Activated T-helper 1 cell treated with anti-CD3 and anti-CD28 coated beads, Interleukin-12 subunit alpha, Interleukin-12 subunit beta, Interleukin-2, Interleukin-4 antibody, amounts not matched to agents 30 ng/mL and 10 ng/mL and 1 ng/mL, durations not matched to agents 14 hours and 24 hours and 36 hours (primary cell): ENCODE measurements at regions of chr6 and their contacts with region 1.

Region 1: GRCh38 chr6:109690737-109691621 is at the starts of genes AK9 and FIG4:
- DNase-seq: peak; percentile 85
- H3K4me3 Mint-ChIP-seq: peak within 1 kb of the TSS; percentile 87
- H3K27ac Mint-ChIP-seq: peak within 1 kb of the TSS; percentile 84
- H3K4me1 Mint-ChIP-seq: peaks cover 47% of the 10 kb centered on the region
- H3K27me3 Mint-ChIP-seq: peaks cover 13% of the 10 kb centered on the region
- total RNA-seq, gene AK9: 2.8 and 3.8 TPM in 2 replicates
- total RNA-seq, gene FIG4: 7.5 and 8.1 TPM in 2 replicates

Region 2: DNA sequence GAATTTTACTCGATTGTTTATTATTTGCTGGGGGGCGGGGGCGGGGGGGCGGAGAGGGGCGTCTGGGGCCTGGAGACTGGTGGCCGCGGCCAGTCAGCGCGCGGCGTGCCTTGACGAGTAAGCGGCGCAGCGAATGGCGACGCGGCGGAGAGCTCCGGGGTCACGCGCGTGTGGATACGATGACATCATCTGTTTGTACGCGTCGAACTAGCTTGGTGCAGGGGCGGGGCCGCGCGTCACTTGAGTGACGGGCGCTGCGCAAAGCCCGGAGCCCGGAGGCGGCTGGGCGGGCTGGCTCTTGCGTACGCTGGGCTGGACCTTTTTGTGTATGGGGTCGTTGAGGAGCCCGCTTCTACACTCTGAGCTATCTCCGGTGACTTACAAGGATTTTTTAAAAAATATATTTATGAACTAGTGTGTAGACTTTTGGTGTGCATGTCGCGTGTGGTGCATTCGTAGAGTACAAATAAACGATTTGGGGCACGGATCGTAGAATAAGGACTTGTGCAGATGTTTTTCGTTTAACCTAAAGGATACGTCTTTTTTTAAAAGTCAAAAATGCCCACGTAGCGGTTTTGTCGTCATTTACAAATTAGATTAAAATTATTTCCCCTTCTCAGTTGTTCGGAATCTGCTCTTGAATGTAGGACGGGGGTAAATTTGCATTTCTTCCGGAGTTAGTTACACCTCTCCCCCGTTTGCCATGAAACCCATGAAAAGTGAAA is 1132.4 kb before region 1 on chr6:
- intact Hi-C with region 1: loop called (anchors 5 kb)
- DNase-seq: peak; percentile 95
- H3K4me3 Mint-ChIP-seq: peak overlapping the region; percentile 88
- H3K27ac Mint-ChIP-seq: peak overlapping the region; percentile 91
- H3K4me1 Mint-ChIP-seq: peaks cover 32% of the 10 kb centered on the region
- H3K27me3 Mint-ChIP-seq: peaks cover 47% of the 10 kb centered on the region

Region 3: GRCh38 chr6:109440331-109441068 is 250.5 kb before region 1 on chr6 and contains the starts of genes PPIL6 and SMPD2:
- intact Hi-C with region 1: loop called (anchors 2 kb)
- DNase-seq: peak; percentile 79
- H3K4me3 Mint-ChIP-seq: peak within 1 kb of the TSS; percentile 88
- H3K27ac Mint-ChIP-seq: peak within 1 kb of the TSS; percentile 91
- H3K4me1 Mint-ChIP-seq: peaks cover 23% of the 10 kb centered on the region
- H3K27me3 Mint-ChIP-seq: peaks cover 5% of the 10 kb centered on the region
- total RNA-seq, gene PPIL6: 0.13 and 0.29 TPM in 2 replicates
- total RNA-seq, gene SMPD2: 18.5 and 19.1 TPM in 2 replicates

Region 4: DNA sequence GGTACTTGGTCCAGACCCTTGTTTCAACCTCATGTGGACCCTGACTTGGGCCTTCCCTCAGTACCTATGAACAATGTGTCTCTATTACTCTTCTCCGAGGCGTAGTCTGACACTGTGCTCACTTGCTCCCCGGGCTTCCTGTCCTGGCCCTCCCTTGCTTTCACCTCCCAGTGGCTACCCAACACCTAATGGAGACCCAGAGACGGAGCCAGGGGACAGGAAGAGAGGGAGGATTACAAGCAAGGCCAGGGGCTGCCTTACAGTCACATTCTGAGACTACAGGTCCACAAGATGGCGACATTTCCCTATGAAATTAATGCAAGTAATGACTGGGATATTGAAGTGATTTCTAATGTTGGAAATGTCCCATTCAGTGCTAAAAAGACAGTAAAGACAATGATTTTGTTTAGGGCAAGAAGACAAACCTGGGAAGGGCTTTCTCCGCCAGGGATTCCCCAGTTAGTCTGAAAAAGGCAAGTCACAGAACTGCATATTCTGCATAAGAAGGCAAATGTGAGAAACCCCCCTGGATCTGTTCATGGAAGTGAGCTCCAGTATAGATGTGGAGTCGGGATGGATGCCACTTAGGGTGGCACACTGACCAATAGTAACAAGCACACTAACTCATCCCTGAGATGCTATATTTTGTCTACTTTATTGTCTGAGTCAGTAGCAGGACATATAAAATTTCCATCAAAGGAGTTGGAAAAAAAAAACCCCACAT is 163.9 kb before region 1 on chr6:
- intact Hi-C with region 1: loop called (anchors 1 kb)
- DNase-seq: peak; percentile 35
- H3K4me3 Mint-ChIP-seq: no peak overlapping the region
- H3K27ac Mint-ChIP-seq: no peak overlapping the region
- H3K4me1 Mint-ChIP-seq: no peaks in the 10 kb centered on the region
- H3K27me3 Mint-ChIP-seq: peaks cover 5% of the 10 kb centered on the region

Region 5: DNA sequence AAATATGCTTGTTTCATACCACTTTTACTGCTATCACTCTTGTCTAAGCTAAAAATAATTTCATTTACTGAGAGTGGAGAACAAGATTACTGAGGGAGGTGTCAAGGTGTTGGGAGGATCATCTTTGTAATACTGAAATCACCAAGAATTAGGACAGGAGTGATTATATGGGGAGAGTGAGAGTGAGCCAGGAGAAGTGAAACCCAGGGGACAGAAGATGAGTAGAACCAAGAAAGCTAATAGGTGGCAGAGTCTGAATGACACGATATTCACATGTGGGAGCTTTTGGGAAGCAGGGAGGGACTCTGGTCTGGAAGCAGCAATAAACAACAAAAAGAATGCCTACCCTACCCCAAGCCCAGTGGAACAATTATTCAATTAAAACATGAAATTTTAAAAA is 58.6 kb before region 1 on chr6:
- intact Hi-C with region 1: no loop called
- DNase-seq: no peak
- H3K4me3 Mint-ChIP-seq: no peak overlapping the region
- H3K27ac Mint-ChIP-seq: no peak overlapping the region
- H3K4me1 Mint-ChIP-seq: peaks cover 17% of the 10 kb centered on the region
- H3K27me3 Mint-ChIP-seq: no peaks in the 10 kb centered on the region

Region 6: GRCh38 chr6:109678240-109678639 is 12.7 kb before region 1 on chr6:
- intact Hi-C with region 1: loop called (anchors 1 kb)
- DNase-seq: no peak
- H3K4me3 Mint-ChIP-seq: no peak overlapping the region
- H3K27ac Mint-ChIP-seq: no peak overlapping the region
- H3K4me1 Mint-ChIP-seq: peaks cover 7% of the 10 kb centered on the region
- H3K27me3 Mint-ChIP-seq: no peaks in the 10 kb centered on the region

Region 7: GRCh38 chr6:109722564-109723254 is 31.7 kb after region 1 on chr6:
- intact Hi-C with region 1: no loop called
- DNase-seq: no peak
- H3K4me3 Mint-ChIP-seq: no peak overlapping the region
- H3K27ac Mint-ChIP-seq: no peak overlapping the region
- H3K4me1 Mint-ChIP-seq: no peaks in the 10 kb centered on the region
- H3K27me3 Mint-ChIP-seq: no peaks in the 10 kb centered on the region

Region 8: DNA sequence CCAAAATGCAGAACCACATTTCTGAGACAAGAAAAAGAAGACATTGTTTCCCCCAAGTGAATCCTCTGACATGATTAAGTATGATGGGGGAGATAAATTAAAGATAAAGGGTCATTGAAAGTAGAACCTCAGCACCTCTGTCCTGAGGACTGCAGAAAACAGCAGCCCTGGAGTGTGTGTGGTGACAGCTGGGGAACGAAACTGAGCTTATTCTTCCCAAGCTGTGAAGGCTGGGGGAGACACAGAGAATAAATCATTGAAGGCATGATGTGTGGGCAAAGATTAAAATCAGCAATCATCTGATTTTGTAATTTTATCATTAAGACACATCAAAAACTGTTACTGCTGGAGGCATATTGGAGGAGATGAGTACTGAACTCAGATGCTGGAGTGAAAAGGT is 219.6 kb after region 1 on chr6:
- intact Hi-C with region 1: no loop called
- DNase-seq: no peak
- H3K4me3 Mint-ChIP-seq: no peak overlapping the region
- H3K27ac Mint-ChIP-seq: no peak overlapping the region
- H3K4me1 Mint-ChIP-seq: no peaks in the 10 kb centered on the region
- H3K27me3 Mint-ChIP-seq: peaks cover 7% of the 10 kb centered on the region

Region 9: DNA sequence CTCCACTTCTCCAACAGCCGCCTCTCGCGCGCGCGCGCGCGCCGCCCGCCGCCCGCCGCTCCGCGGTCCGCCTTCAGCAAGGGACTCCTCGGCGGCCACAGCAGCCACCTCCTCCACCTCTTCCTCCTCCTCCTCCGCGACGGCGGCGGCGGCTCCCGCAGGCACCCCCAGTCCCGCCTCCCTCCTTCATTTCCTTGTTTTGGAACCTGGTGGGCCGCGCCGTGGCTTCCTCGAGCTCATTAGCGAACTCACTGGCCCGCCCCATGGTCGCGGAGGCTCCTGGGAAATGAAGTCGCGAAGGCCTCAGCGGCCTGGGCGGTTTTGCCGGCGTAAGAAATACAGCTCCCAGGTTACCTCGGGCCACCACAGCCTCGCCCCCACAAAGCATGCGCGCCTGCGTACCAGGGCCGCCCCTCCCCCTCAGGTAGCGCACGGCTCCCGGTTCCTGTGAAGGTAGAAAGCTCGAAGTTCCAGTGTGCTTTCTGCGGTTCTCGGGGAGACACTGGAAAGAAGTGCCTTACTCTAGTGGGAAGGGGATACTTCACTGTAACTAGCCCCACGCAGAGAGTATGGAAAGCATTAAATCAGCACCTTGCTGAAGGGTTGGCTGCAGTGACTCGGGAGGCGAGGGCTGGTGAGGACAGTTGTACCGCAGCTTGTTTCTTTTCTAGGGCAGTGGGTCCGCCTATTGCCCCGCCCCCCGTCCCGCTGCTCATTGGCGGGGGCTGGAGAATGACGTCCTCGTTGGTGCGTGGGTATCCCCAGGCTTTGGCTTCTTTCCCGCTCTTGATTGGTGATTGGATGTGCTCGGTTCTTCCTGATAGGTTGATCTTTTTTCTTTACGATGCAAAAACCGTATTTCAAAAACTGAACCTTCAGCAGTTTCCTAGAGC is 1124.5 kb after region 1 on chr6 and contains the start of gene CDK19:
- intact Hi-C with region 1: loop called (anchors 1 kb)
- DNase-seq: peak; percentile 97
- H3K4me3 Mint-ChIP-seq: peak within 1 kb of the TSS; percentile 97
- H3K27ac Mint-ChIP-seq: peak within 1 kb of the TSS; percentile 98
- H3K4me1 Mint-ChIP-seq: peaks cover 38% of the 10 kb centered on the region
- H3K27me3 Mint-ChIP-seq: no peaks in the 10 kb centered on the region
- total RNA-seq, gene CDK19: 12.4 and 13.7 TPM in 2 replicates